ENCODE measurements at regions of chr14 and their contacts with region 1.

Region 1: DNA sequence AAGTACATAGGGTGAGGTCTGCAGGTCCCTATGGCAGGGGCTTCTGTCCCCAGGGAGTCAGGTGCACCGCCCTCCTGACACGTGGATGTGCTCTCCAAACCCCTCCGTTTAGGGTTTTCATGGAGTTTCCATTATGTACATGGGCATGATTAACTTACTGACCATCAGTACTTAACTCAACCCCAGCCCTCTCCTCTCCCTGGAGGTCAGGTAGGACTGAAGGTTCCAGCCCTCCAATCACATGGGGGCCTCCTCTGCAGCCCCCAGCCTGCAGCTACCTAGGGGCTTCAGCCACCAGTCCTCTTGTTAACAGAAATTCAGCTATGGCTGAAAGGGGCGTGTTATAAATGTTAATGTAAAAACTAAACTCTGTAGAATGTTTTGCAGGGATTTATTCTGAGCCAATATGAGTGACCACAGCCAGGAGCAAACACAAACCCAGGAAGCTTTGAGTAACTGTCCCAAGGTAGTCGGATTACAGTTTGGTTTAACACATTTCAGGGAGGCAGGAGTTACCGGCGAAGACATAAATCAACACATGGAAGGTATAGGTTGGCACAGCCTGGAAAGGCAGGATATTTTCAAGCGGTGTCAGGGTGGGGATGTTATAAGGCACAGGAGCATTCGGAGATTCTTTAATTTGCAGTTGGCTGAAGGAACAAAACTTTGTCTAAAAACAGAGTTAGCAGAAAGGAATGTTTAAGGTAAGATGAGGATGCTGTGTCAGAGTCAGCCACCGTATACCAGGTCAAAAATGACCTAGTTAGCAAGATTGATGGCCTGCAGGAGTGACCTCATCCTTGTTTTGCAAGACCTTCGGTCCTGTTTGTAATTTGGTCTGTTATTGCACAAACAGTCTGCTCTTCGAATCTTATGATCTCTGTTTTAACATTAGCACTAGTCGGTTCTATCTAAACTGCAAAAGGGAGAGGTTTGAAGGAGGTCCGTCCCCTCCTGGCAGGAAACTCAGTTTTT is 75.2 kb downstream of the TNFAIP2 start:
- DNase-seq: peak; percentile 57
- H3K27ac ChIP-seq: peak overlapping the region; percentile 49; the same call in 1 of the 2 replicates
- CTCF ChIP-seq: no peak

Region 2: GRCh38 chr14:102554821-102555263 is 643.6 kb before region 1 on chr14:
- CTCF ChIA-PET with region 1: no interaction called
- POLR2A ChIA-PET with region 1: interaction called, 14 read pairs
- DNase-seq: no peak
- H3K27ac ChIP-seq: peak overlapping the region; percentile 92
- CTCF ChIP-seq: no peak